ENCODE measurements at regions of chr12 and their contacts with region 1.

Region 1: DNA sequence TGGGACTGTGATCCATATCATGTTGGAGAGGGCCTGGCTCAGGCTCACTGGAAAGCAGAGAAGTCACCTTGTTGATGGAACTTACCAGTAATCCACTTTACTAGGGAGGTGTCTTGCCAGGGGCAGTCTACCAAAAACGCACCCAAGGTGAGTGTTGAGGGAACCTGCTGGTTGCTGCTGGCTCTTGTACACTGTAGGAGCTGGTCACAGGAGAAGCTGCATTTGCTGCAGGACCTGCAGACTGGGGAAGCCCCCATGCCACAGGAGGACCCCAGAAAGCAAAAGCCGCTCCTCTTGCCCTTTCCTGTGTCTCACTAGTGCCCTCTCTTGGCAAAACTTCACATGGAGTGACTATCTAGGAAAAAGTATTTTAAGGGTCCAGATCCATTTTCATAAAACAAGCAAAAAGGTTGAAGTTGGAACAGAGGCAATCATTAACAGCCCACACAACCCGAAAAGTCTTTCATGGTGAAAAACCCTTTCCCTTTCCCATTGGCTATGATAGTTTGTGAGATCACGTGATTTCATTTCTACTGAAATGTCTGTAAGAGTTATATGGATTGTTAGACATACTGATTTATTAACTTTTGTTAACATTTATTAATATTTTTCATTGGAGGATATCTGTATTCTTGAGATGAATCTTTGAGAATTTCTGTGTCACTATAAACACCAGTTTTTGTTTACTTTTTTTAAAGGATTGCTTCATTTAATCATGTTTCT is 59.2 kb downstream of the RASSF8 start:
- DNase-seq: no peak
- ATAC-seq: peak; percentile 55
- H3K4me3 ChIP-seq: no peak overlapping the region
- H3K27ac ChIP-seq: no peak overlapping the region
- H3K4me1 ChIP-seq: no peaks in the 10 kb centered on the region
- H3K27me3 ChIP-seq: peaks cover 0 to 3% of the 10 kb centered on the region in 2 experiments; a peak in 2 of 4 replicates
- CTCF ChIP-seq: peak; percentile 48 to 66 (median 55)
- EP300 ChIP-seq: no peak
- POLR2A ChIP-seq: no peak
- RAD21 ChIP-seq: peak; percentile 70

Region 2: GRCh38 chr12:25594376-25594775 is 423.3 kb before region 1 on chr12:
- CTCF ChIA-PET with region 1: interaction called, 3 read pairs
- POLR2A ChIA-PET with region 1: interaction called, 15 read pairs
- RAD21 ChIA-PET with region 1: no interaction called
- SMC1A ChIA-PET with region 1: no interaction called
- in situ Hi-C with region 1: no loop called
- intact Hi-C with region 1: no loop called
- DNase-seq: no peak
- ATAC-seq: no peak
- H3K4me3 ChIP-seq: no peak overlapping the region
- H3K27ac ChIP-seq: no peak overlapping the region
- H3K4me1 ChIP-seq: no peaks in the 10 kb centered on the region
- H3K27me3 ChIP-seq: no peaks in the 10 kb centered on the region
- CTCF ChIP-seq: no peak
- EP300 ChIP-seq: no peak
- POLR2A ChIP-seq: no peak
- RAD21 ChIP-seq: no peak